ENCODE measurements at regions of chr20 and their contacts with region 1.

Region 1: GRCh38 chr20:38434743-38435554 is at the start of gene SNHG17:
- DNase-seq: peak; percentile 97
- ATAC-seq: peak; percentile 89
- total RNA-seq, gene SNHG17: 5.6 TPM

Region 2: GRCh38 chr20:38387953-38388352 is 47.0 kb before region 1 on chr20:
- intact Hi-C with region 1: no loop called
- DNase-seq: no peak
- ATAC-seq: no peak

Region 3: DNA sequence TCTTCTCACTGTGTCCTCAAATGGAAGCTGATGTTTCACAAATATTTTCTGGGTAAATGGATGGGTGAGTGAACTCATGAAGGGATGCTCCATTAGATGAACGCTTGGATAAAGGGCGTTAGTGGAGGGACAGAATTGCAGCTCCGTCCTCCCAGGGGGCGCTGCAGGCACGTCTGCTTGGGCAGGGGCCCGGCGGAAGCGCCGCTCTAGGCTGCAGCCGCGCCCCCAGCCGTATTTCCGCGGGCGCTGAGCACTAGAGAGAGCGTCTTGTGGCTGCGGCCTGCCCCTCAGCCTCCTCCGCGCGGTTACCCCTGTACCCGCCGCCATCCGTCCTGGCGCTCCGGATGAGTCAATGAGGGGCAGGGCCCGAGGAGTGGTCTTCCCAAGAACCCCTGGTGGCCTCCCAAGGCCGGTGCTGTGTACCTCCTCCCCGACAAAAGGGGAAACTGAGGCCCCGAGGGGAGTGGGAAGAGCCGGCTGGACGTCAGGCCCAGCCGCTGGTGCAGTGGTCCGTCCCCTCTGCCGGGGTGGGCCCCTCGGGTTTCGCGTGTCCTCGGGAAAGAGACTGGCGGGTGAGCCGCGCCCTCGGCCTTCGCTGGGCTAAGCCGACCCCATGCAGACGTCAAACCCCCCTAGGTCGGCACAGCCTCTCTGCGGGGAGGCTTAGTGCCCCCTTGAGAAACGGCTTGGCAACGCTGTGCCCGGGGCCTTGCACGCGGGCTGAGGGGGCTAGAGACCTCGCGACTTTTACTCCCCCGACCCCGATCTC is 11.7 kb after region 1 on chr20:
- intact Hi-C with region 1: loop called (anchors 1 kb)
- DNase-seq: peak; percentile 96
- ATAC-seq: peak; percentile 92

Region 4: DNA sequence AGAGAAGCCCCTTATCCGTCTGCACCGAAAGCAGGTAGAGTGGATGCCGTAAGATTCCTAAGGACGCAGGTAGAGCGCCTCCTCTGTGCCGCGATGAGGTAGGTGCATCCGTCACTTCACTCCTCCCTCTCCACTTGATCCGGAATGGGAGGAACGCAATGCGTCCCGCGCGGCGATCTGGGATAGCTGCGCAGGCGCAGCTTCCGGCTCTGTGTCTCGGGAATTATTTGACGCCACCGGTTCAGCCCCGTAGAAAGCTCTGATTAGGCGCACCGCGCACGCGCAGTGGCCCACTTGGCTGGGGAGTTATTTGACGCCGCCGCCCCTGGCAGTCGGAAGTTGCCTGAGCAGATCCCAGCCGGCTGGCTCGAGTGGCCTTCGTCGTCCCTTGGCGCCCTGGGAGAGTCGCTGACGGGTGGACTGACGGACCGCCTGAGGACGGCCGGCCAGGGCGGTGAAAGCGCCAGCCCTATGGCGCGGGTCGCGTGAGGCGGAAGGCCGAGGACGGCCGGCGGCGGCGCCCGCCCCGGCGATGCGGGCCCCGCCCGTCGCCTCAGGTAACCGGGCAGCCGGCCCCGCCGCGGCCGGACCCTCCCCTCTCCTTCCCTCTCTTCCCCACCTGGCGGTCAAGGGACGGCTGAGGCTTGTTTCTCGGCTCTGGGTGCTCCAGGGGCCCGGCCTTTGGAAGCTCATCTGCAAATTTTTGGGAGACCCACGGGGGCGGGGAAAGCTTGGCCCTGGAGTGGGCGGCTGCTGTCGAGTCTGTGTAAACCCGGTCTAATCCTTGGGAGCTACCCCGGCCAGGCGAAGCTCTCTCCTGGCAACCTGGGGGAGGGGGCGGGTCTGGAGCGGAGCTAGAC is 37.8 kb after region 1 on chr20 and contains the start of gene RALGAPB:
- intact Hi-C with region 1: loop called (anchors 5 kb)
- DNase-seq: peak; percentile 100
- ATAC-seq: peak; percentile 98
- total RNA-seq, gene RALGAPB: 21.9 TPM